Activated CD4-positive, alpha-beta T cell treated with anti-CD3 and anti-CD28 coated beads, Interleukin-2, amount 10 ng/mL, durations not matched to agents 7 days and 5 days (primary cell): ENCODE measurements at regions of chr13 and their contacts with region 1.

Region 1: DNA sequence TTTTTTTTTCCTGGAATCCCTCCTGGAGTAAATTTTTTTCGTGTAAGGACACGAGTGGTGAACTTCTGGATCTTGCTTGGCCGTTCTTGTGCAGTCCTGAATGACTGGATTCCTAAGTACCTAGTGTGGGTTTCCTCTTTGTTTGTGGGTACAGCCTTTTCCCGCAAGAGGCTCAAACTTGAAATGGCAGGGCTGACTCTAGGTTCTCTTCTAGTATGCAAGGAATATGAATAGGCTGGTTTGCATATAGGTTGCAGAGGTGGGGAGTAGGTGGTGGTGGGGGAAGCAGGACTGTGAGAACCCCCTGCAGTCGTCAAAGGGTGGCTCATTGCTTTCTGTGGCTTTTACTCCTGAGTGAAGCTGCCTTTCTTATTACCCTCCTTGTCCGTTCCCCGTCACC is 13.6 kb downstream of the UBAC2 start:
- DNase-seq: no peak
- H3K4me3 Mint-ChIP-seq: peak overlapping the region; percentile 81
- H3K27ac Mint-ChIP-seq: peak overlapping the region; percentile 95
- H3K4me1 Mint-ChIP-seq: peaks cover 77% of the 10 kb centered on the region
- H3K27me3 Mint-ChIP-seq: no peaks in the 10 kb centered on the region

Region 2: DNA sequence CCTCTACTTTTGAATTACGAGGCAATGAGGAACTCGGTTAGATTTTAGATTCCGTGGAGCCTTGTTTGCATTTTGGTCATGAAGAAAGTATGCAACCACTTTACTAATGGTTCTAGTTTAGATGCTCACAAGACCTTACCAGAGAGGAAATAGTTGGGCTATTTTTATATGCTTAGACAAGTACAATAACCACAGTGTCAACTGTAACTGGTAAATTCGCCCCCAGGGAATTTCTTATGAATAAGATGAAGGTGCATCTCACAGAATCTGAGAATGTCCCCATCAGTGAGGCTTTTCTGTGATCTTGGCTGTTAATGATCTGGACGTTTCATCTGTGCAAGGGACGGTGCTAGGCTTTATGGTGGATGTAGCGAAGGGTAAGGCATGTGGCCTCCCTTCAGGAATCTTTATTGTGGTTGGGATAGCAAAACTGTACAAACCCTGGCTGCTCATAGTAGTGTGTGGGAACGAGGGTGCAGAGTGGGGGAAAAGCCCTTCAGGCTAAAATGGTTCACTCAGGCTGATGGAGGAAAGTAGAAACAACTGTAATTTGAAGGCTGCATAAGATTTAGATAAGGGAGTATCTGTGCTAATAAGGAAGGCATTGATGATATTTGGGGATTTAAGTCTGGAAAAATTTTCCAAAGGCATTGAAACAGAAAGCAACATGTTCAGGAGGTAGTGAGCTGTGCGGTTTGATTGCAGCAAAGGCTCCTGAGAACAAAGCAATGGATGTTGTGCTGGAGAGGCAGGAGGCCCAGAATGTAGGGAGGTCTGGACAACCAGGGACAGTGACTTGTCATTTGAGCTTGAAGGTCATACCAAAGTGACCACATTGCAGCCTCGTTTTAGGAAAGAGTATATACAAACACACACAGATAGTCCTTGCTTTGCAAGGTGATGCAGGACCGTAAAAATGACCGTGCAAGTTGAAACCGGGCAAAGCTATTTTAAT is 14.8 kb after region 1 on chr13:
- CTCF ChIA-PET with region 1: interaction called, 6 read pairs
- POLR2A ChIA-PET with region 1: interaction called, 12 read pairs
- DNase-seq: no peak
- H3K4me3 Mint-ChIP-seq: peak overlapping the region; percentile 66
- H3K27ac Mint-ChIP-seq: peak overlapping the region; percentile 77
- H3K4me1 Mint-ChIP-seq: peaks cover 70% of the 10 kb centered on the region
- H3K27me3 Mint-ChIP-seq: no peaks in the 10 kb centered on the region